Activated B cell treated with CpG ODN at 0.5 μM for 24 hours (primary cell): ENCODE measurements at regions of chr11 and their contacts with region 1.

Region 1: GRCh38 chr11:36411202-36411640 is 98.9 kb downstream of the TRAF6 start:
- DNase-seq: peak; percentile 26
- ATAC-seq: peak; percentile 80
- H3K4me3 Mint-ChIP-seq: peak overlapping the region; percentile 71
- H3K27ac Mint-ChIP-seq: peak overlapping the region; percentile 85
- H3K4me1 Mint-ChIP-seq: peaks cover 66% of the 10 kb centered on the region
- H3K27me3 Mint-ChIP-seq: no peaks in the 10 kb centered on the region
- CTCF ChIP-seq: no peak

Region 2: DNA sequence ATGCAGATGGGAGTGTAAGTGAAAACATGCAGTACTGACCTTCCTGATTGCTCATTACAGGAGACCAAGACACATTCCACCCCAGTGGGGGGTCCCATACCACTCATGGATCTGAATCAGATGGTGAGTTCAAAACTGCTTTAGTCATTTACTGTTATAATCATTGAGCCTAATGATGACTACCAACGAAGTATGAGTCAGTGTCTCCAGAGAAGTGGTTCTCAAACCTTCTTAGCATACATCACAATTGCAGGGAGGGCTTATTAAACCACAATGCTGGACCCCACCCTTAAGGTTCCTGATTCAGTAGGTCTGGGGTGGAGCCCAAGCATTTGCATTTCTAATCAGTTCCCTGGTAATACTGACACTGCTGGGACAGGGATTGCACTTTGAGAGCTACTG is 1196.4 kb before region 1 on chr11:
- CTCF ChIA-PET with region 1: no interaction called
- POLR2A ChIA-PET with region 1: no interaction called
- intact Hi-C with region 1: no loop called
- DNase-seq: no peak
- ATAC-seq: peak; percentile 32
- H3K4me3 Mint-ChIP-seq: peak overlapping the region; percentile 44
- H3K27ac Mint-ChIP-seq: peak overlapping the region; percentile 70
- H3K4me1 Mint-ChIP-seq: peaks cover 82% of the 10 kb centered on the region
- H3K27me3 Mint-ChIP-seq: no peaks in the 10 kb centered on the region
- CTCF ChIP-seq: no peak

Region 3: DNA sequence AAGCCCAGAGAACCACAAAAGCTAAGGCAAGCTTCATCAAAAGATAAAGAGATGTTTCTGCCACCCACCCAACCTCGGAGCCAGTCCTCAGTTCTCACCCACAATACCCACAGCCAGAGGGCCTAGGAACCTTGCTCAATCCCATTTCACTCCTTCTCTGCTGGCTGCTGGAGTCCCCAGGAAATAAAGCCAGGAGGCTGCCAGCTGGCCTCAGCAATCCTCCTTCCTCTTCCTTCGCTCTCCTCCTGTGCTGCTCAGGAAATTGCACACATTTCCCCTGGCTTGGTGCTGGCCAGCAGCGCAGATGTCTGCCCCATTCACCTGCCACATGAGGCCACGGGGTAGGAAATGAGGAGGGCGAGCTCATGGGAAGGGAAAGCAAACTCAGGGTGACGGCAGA is 559.2 kb before region 1 on chr11:
- CTCF ChIA-PET with region 1: no interaction called
- POLR2A ChIA-PET with region 1: no interaction called
- intact Hi-C with region 1: no loop called
- DNase-seq: no peak
- ATAC-seq: no peak
- H3K4me3 Mint-ChIP-seq: no peak overlapping the region
- H3K27ac Mint-ChIP-seq: no peak overlapping the region
- H3K4me1 Mint-ChIP-seq: no peaks in the 10 kb centered on the region
- H3K27me3 Mint-ChIP-seq: peaks cover 11% of the 10 kb centered on the region
- CTCF ChIP-seq: no peak

Region 4: GRCh38 chr11:36354221-36355003 is 56.8 kb before region 1 on chr11:
- CTCF ChIA-PET with region 1: no interaction called
- POLR2A ChIA-PET with region 1: no interaction called
- intact Hi-C with region 1: loop called (anchors 5 kb)
- DNase-seq: no peak
- ATAC-seq: peak; percentile 38
- H3K4me3 Mint-ChIP-seq: peak overlapping the region; percentile 17
- H3K27ac Mint-ChIP-seq: no peak overlapping the region
- H3K4me1 Mint-ChIP-seq: peaks cover 45% of the 10 kb centered on the region
- H3K27me3 Mint-ChIP-seq: no peaks in the 10 kb centered on the region
- CTCF ChIP-seq: no peak

Region 5: DNA sequence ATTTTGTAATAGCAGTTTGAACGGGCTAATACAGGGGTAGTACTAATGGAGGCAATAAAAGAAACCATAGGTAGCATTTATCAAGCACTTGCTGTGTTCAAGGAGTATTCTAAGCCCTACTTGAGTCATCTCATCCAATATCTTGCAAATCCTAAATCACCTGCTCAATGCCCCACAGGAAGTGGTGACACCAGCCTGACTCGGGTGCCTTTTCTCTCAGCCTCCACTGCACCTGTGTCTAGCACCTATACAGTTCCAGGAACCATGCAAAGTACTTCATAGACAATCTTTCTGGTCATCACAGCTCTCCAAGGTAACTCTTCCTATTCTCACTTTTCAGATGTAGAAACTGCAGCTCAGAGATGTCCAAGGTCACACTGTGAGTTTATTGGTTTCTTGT is 17.2 kb before region 1 on chr11:
- CTCF ChIA-PET with region 1: no interaction called
- POLR2A ChIA-PET with region 1: interaction called, 3 read pairs
- intact Hi-C with region 1: loop called (anchors 2 kb)
- DNase-seq: no peak
- ATAC-seq: no peak
- H3K4me3 Mint-ChIP-seq: no peak overlapping the region
- H3K27ac Mint-ChIP-seq: no peak overlapping the region
- H3K4me1 Mint-ChIP-seq: peaks cover 40% of the 10 kb centered on the region
- H3K27me3 Mint-ChIP-seq: no peaks in the 10 kb centered on the region
- CTCF ChIP-seq: no peak

Region 6: GRCh38 chr11:36400766-36401455 is 10.3 kb before region 1 on chr11:
- CTCF ChIA-PET with region 1: interaction called, 3 read pairs
- POLR2A ChIA-PET with region 1: interaction called, 8 read pairs
- intact Hi-C with region 1: loop called (anchors 1 kb)
- DNase-seq: no peak
- ATAC-seq: peak; percentile 34
- H3K4me3 Mint-ChIP-seq: peak overlapping the region; percentile 75
- H3K27ac Mint-ChIP-seq: peak overlapping the region; percentile 50
- H3K4me1 Mint-ChIP-seq: peaks cover 38% of the 10 kb centered on the region
- H3K27me3 Mint-ChIP-seq: no peaks in the 10 kb centered on the region
- CTCF ChIP-seq: no peak

Region 7: GRCh38 chr11:36450110-36450572 is 38.9 kb after region 1 on chr11:
- CTCF ChIA-PET with region 1: no interaction called
- POLR2A ChIA-PET with region 1: no interaction called
- intact Hi-C with region 1: loop called (anchors 5 kb)
- DNase-seq: no peak
- ATAC-seq: peak; percentile 64
- H3K4me3 Mint-ChIP-seq: peak overlapping the region; percentile 74
- H3K27ac Mint-ChIP-seq: peak overlapping the region; percentile 61
- H3K4me1 Mint-ChIP-seq: peaks cover 23% of the 10 kb centered on the region
- H3K27me3 Mint-ChIP-seq: no peaks in the 10 kb centered on the region
- CTCF ChIP-seq: no peak